ENCODE measurements at regions of chr2 and their contacts with region 1.

Region 1: GRCh38 chr2:60806988-60807681 is 51.1 kb downstream of the PAPOLG start:
- DNase-seq: peak; percentile 81
- ATAC-seq: peak; percentile 93
- H3K4me3 Mint-ChIP-seq: peak overlapping the region; percentile 26
- H3K27ac Mint-ChIP-seq: peak overlapping the region; percentile 91
- H3K4me1 Mint-ChIP-seq: peaks cover 51% of the 10 kb centered on the region
- H3K27me3 Mint-ChIP-seq: no peaks in the 10 kb centered on the region
- CTCF ChIP-seq: no peak

Region 2: GRCh38 chr2:60608679-60609078 is 198.5 kb before region 1 on chr2:
- CTCF ChIA-PET with region 1: no interaction called
- POLR2A ChIA-PET with region 1: no interaction called
- intact Hi-C with region 1: no loop called
- DNase-seq: no peak
- ATAC-seq: no peak
- H3K4me3 Mint-ChIP-seq: no peak overlapping the region
- H3K27ac Mint-ChIP-seq: no peak overlapping the region
- H3K4me1 Mint-ChIP-seq: no peaks in the 10 kb centered on the region
- H3K27me3 Mint-ChIP-seq: peaks cover 6% of the 10 kb centered on the region
- CTCF ChIP-seq: no peak

Region 3: GRCh38 chr2:60693551-60693950 is 113.6 kb before region 1 on chr2:
- CTCF ChIA-PET with region 1: no interaction called
- POLR2A ChIA-PET with region 1: no interaction called
- intact Hi-C with region 1: no loop called
- DNase-seq: no peak
- ATAC-seq: no peak
- H3K4me3 Mint-ChIP-seq: no peak overlapping the region
- H3K27ac Mint-ChIP-seq: no peak overlapping the region
- H3K4me1 Mint-ChIP-seq: no peaks in the 10 kb centered on the region
- H3K27me3 Mint-ChIP-seq: no peaks in the 10 kb centered on the region
- CTCF ChIP-seq: no peak

Region 4: GRCh38 chr2:60818272-60818671 is 11.1 kb after region 1 on chr2:
- CTCF ChIA-PET with region 1: interaction called, 67 read pairs
- POLR2A ChIA-PET with region 1: interaction called, 19 read pairs
- intact Hi-C with region 1: no loop called
- DNase-seq: peak; percentile 85
- ATAC-seq: peak; percentile 44
- H3K4me3 Mint-ChIP-seq: peak overlapping the region; percentile 36
- H3K27ac Mint-ChIP-seq: peak overlapping the region; percentile 99
- H3K4me1 Mint-ChIP-seq: peaks cover 50% of the 10 kb centered on the region
- H3K27me3 Mint-ChIP-seq: no peaks in the 10 kb centered on the region
- CTCF ChIP-seq: peak; percentile 42

Region 5: GRCh38 chr2:60966507-60967405 is 159.6 kb after region 1 on chr2:
- CTCF ChIA-PET with region 1: interaction called, 10 read pairs
- POLR2A ChIA-PET with region 1: no interaction called
- intact Hi-C with region 1: no loop called
- DNase-seq: no peak
- ATAC-seq: peak; percentile 40
- H3K4me3 Mint-ChIP-seq: no peak overlapping the region
- H3K27ac Mint-ChIP-seq: peak overlapping the region; percentile 65
- H3K4me1 Mint-ChIP-seq: peaks cover 44% of the 10 kb centered on the region
- H3K27me3 Mint-ChIP-seq: no peaks in the 10 kb centered on the region
- CTCF ChIP-seq: no peak

Region 6: GRCh38 chr2:61006486-61007105 is 199.5 kb after region 1 on chr2:
- CTCF ChIA-PET with region 1: interaction called, 13 read pairs
- POLR2A ChIA-PET with region 1: interaction called, 3 read pairs
- intact Hi-C with region 1: no loop called
- DNase-seq: no peak
- ATAC-seq: no peak
- H3K4me3 Mint-ChIP-seq: no peak overlapping the region
- H3K27ac Mint-ChIP-seq: no peak overlapping the region
- H3K4me1 Mint-ChIP-seq: peaks cover under 1% of the 10 kb centered on the region
- H3K27me3 Mint-ChIP-seq: no peaks in the 10 kb centered on the region
- CTCF ChIP-seq: no peak

Measured in activated CD8-positive, alpha-beta T cell treated with anti-CD3 and anti-CD28 coated beads for 36 hours (primary cell).